Breast epithelium (tissue), 4 donors: ENCODE measurements at regions of chr3 and their contacts with region 1.

Region 1: DNA sequence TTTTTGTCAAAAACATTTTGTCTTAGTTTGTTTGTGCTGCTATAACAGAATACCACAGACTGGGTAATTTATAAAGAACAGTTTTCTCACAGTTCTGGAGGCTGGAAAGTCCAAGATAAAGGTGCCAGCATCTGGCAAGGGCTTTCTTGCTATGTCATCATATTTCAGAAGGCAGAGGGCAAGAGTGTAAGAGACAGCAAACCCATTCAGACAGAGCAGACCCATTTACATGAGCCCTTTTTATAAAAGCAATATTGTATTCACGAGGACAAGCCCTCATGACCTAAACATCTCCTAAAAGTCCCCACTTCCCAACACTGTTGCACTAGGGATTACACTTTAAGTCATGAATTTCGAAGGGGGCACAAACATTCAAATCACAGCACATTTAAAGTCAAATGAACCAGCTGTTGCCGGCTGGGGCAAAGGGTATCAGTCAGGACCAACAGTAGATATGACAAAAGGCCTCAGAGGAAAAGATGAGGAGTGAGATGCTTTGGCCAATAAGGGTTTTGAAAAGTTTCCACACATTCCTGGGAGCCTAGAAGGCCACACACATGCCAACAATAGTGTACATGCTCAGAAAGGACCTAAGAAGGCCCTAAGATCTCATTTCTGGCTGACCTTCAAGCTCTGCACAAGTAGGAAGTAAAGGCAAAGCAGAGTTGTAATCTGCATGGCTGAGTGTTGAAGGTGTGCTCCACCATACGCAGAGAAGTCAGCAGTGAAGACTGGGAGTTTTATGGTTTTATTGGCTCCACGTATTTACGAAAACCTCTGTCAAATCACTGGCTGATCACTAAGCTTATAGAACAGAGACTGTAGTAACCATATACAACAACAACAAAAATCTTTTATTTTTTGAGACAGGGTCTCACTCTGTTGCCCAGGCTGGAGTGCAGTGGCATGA is 37.9 kb downstream of the UQCC5 start:
- DNase-seq: no peak
- H3K4me3 ChIP-seq: no peak overlapping the region
- H3K27ac ChIP-seq: no peak overlapping the region
- H3K4me1 ChIP-seq: no peaks in the 10 kb centered on the region
- H3K27me3 ChIP-seq: no peaks in the 10 kb centered on the region
- CTCF ChIP-seq: no peak
- POLR2A ChIP-seq: no peak

Region 2: DNA sequence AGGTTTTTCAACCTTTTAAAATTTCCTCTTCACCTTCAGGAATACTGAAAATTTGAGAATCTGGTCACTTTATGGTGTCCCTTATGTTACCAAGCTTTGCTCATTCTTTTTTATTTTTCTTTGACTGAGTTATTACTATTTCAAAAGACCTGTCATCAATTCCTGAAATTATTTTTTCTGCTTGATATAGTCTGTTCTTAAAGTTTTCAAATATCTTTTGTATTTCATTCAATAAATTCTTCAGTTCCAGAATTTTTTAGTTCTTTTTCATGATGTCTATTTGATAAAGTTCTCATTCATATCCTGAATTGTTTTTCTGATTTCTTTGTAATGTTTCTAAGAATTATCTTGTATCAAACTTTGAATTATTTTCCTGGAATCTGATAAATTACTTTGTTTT is 25.9 kb after region 1 on chr3:
- intact Hi-C with region 1: loop called (anchors 2 kb)
- DNase-seq: no peak
- H3K4me3 ChIP-seq: no peak overlapping the region
- H3K27ac ChIP-seq: no peak overlapping the region
- H3K4me1 ChIP-seq: no peaks in the 10 kb centered on the region
- H3K27me3 ChIP-seq: no peaks in the 10 kb centered on the region
- CTCF ChIP-seq: no peak
- POLR2A ChIP-seq: no peak